Heart right ventricle (tissue), 16 donors: ENCODE measurements at regions of chr6 and their contacts with region 1.

Region 1: DNA sequence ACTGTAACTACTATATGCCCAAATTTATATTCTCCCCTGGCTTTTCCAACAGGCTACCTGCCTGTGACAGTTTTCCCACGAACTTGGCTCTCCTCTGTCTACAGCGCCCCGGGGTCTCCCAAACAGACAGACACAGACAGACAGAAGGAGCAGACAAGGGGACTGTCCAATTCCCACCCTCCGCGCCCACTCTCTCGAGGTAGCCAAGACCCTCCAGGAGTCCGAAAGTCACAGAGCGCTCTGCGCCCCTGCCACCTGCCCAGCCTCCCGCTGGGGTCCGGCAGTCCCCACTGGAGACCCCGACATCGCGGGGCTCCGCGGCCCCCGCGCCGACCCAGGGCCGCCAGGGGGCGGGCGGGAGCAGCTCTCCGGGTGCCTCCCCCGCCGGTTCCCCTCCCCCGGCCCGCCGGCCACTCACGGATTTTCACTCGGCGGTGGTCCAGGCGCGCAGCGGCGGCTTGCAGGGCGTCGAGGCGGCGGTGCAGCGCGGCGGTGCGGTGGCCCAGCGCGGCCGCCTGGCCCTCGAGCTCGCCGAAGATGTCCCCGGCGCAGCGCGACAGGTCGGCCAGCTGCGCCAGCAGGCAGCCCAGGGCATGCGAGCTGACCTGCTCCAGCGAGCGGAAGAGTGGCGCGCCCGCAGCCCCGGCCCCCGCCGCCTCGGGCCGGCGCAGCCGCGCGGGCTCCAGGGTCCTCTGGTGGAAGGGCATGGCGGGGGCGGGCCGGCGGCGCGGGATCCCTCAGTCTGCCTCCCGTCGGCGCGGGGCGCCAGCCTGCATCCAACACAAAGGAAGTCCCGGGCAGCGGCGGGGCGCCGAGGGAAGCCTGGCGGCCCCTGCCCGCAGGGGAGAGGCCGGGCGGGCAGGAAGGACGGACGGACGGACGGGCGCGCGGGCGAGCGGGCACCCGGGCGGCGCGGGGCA is 81.3 kb upstream of the CCDC28A start:
- DNase-seq: peak; percentile 73 to 84
- ATAC-seq: peak; percentile 78 to 86 (median 84)
- H3K4me3 ChIP-seq: peak overlapping the region; percentile 48 to 88 (median 72)
- H3K27ac ChIP-seq: peak overlapping the region; percentile 46 to 82 (median 75)
- H3K4me1 ChIP-seq: peaks cover 0 to 14% (median 9%) of the 10 kb centered on the region in 9 donors
- H3K27me3 ChIP-seq: peaks cover 0 to 7% (median 0%) of the 10 kb centered on the region in 7 donors
- CTCF ChIP-seq: peak; percentile 80 to 96 (median 92)

Region 2: GRCh38 chr6:138765896-138766655 is 73.8 kb after region 1 on chr6:
- intact Hi-C with region 1: loop called in 9 of 10 experiments (anchors 1 to 10 kb)
- DNase-seq: no peak
- ATAC-seq: no peak
- H3K4me3 ChIP-seq: no peak overlapping the region
- H3K27ac ChIP-seq: no peak overlapping the region
- H3K4me1 ChIP-seq: no peaks in the 10 kb centered on the region
- H3K27me3 ChIP-seq: no peaks in the 10 kb centered on the region
- CTCF ChIP-seq: peak; percentile 34 to 86 (median 70)